ENCODE measurements at regions of chr3 and their contacts with region 1.

Region 1: GRCh38 chr3:52154117-52155094 is at the start of gene POC1A:
- DNase-seq: peak; percentile 96
- H3K4me3 Mint-ChIP-seq: peak within 1 kb of the TSS; percentile 91
- H3K27ac Mint-ChIP-seq: peak within 1 kb of the TSS; percentile 92
- H3K4me1 Mint-ChIP-seq: peaks cover 18% of the 10 kb centered on the region
- H3K27me3 Mint-ChIP-seq: no peaks in the 10 kb centered on the region
- total RNA-seq, gene POC1A: 32.3 to 32.7 TPM

Region 2: GRCh38 chr3:51982782-51983577 is 171.4 kb before region 1 on chr3 and contains the start of gene ACY1:
- CTCF ChIA-PET with region 1: no interaction called
- intact Hi-C with region 1: loop called (anchors 1 kb)
- DNase-seq: peak; percentile 89
- H3K4me3 Mint-ChIP-seq: peak within 1 kb of the TSS; percentile 95
- H3K27ac Mint-ChIP-seq: peak within 1 kb of the TSS; percentile 91
- H3K4me1 Mint-ChIP-seq: peaks cover 29% of the 10 kb centered on the region
- H3K27me3 Mint-ChIP-seq: no peaks in the 10 kb centered on the region
- total RNA-seq, gene ACY1: 62.1 to 68.9 TPM

Region 3: GRCh38 chr3:52144034-52144795 is 10.2 kb before region 1 on chr3:
- CTCF ChIA-PET with region 1: interaction called, 14 read pairs
- intact Hi-C with region 1: no loop called
- DNase-seq: peak; percentile 86
- H3K4me3 Mint-ChIP-seq: no peak overlapping the region
- H3K27ac Mint-ChIP-seq: no peak overlapping the region
- H3K4me1 Mint-ChIP-seq: peaks cover 4% of the 10 kb centered on the region
- H3K27me3 Mint-ChIP-seq: no peaks in the 10 kb centered on the region

Region 4: GRCh38 chr3:52197842-52198668 is 43.6 kb after region 1 on chr3 and contains the start of gene ALAS1:
- CTCF ChIA-PET with region 1: no interaction called
- intact Hi-C with region 1: loop called (anchors 1 kb)
- DNase-seq: peak; percentile 94
- H3K4me3 Mint-ChIP-seq: peak within 1 kb of the TSS; percentile 92
- H3K27ac Mint-ChIP-seq: peak within 1 kb of the TSS; percentile 84
- H3K4me1 Mint-ChIP-seq: peaks cover 56% of the 10 kb centered on the region
- H3K27me3 Mint-ChIP-seq: no peaks in the 10 kb centered on the region
- total RNA-seq, gene ALAS1: 35.7 to 37.8 TPM

Region 5: GRCh38 chr3:52455283-52456168 is 301.1 kb after region 1 on chr3 and contains the start of gene NISCH:
- CTCF ChIA-PET with region 1: no interaction called
- intact Hi-C with region 1: loop called (anchors 2 kb)
- DNase-seq: peak; percentile 96
- H3K4me3 Mint-ChIP-seq: peak within 1 kb of the TSS; percentile 94
- H3K27ac Mint-ChIP-seq: peak within 1 kb of the TSS; percentile 96
- H3K4me1 Mint-ChIP-seq: peaks cover 35% of the 10 kb centered on the region
- H3K27me3 Mint-ChIP-seq: no peaks in the 10 kb centered on the region
- total RNA-seq, gene NISCH: 50.4 to 52.5 TPM

Measured in activated naive CD4-positive, alpha-beta T cell treated with anti-CD3 and anti-CD28 coated beads for 36 hours (primary cell).